ENCODE measurements at regions of chr10 and their contacts with region 1.

Region 1: GRCh38 chr10:99906470-99906869 is 103.3 kb downstream of the DNMBP start:
- DNase-seq: peak in 2 of 4 donors; percentile 17 to 61
- ATAC-seq: no peak
- H3K4me3 ChIP-seq: no peak overlapping the region
- H3K27ac ChIP-seq: no peak overlapping the region
- H3K4me1 ChIP-seq: no peaks in the 10 kb centered on the region
- H3K27me3 ChIP-seq: no peaks in the 10 kb centered on the region
- CTCF ChIP-seq: no peak
- POLR2A ChIP-seq: no peak

Region 2: GRCh38 chr10:99560277-99561126 is 346.0 kb before region 1 on chr10:
- intact Hi-C with region 1: no loop called
- DNase-seq: peak; percentile 37 to 47 (median 40)
- ATAC-seq: peak; percentile 33
- H3K4me3 ChIP-seq: no peak overlapping the region
- H3K27ac ChIP-seq: no peak overlapping the region
- H3K4me1 ChIP-seq: no peaks in the 10 kb centered on the region
- H3K27me3 ChIP-seq: no peaks in the 10 kb centered on the region
- CTCF ChIP-seq: peak; percentile 24 to 67 (median 52)
- POLR2A ChIP-seq: no peak

Region 3: DNA sequence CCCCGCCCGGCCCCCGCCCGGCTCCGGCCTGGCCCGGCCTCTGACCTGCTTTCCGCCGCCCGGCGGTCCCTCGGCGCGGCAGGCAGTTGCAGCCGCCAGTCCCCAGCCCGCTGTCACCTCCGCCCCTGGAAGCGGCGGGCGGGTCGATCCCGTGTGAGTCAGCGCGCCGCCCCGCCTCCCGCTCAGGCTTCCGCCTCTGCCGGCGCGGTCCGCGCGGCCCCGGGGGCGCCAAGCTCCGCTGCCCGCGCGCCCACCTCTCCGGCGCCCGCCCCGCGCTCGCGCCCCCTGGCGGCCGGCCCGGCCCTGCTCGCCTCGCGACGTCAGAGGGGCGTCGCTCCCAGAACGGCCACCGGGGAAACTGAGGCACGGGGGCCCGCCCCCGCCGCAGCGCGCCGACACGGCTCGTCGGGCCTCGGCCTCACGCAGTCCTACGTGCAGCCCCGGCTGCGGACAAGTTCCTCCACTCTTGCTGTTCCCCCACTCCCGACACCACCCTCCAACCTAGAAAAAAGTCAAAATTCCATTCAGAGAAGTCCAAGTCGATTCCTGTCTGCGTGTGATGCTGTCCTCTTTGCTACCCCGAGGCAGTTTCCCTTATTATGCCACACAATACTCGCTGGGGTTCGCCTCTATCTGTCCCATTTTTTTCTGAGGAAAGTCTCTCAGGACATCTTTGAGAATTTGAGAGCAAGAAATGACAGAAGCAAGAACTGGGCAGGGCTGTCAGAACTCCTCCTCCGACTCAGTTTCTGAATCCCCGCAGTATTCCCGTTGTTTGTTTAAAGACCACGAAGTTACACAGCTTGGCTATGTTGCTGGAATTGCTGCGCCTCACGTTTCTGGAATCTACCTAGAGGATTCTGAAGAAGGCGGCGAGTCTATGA is 103.6 kb after region 1 on chr10 and contains the start of gene DNMBP:
- intact Hi-C with region 1: loop called (anchors 10 kb)
- DNase-seq: peak; percentile 82 to 87 (median 84)
- ATAC-seq: peak; percentile 94
- H3K4me3 ChIP-seq: peak within 1 kb of the TSS; percentile 43 to 52
- H3K27ac ChIP-seq: peak within 1 kb of the TSS; percentile 41 to 75 (median 70)
- H3K4me1 ChIP-seq: peaks cover 16% of the 10 kb centered on the region
- H3K27me3 ChIP-seq: no peaks in the 10 kb centered on the region
- CTCF ChIP-seq: peak in 6 of 7 experiments; percentile 24 to 89 (median 44)
- POLR2A ChIP-seq: peak; percentile 12 to 34 (median 19)
- total RNA-seq, gene DNMBP: 11.5 to 19.2 TPM

Region 4: DNA sequence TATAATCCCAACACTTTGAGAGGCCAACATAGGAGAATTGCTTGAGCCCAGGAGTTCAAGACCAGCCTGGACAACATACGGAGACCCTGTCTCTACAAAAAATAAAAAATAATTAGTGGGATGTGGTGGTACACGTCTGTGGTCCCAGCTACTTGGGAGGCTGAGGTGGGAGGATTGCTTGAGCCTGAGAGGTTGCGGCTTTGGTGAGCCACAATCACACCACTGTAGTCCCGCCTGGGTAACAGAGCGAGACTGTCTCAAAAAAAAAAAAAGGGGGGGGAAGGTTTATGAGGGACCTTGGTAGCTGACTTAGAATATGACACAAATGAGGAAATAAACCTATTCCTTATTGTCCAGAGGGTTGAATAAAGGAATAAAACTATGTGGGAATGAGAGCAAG is 471.4 kb after region 1 on chr10:
- intact Hi-C with region 1: no loop called
- DNase-seq: no peak
- ATAC-seq: no peak
- H3K4me3 ChIP-seq: no peak overlapping the region
- H3K27ac ChIP-seq: no peak overlapping the region
- H3K4me1 ChIP-seq: peaks cover 21% of the 10 kb centered on the region
- H3K27me3 ChIP-seq: no peaks in the 10 kb centered on the region
- CTCF ChIP-seq: no peak
- POLR2A ChIP-seq: no peak

Measured in body of pancreas (tissue), 4 donors.